Right cardiac atrium (tissue), 5 donors: ENCODE measurements at regions of chr3 and their contacts with region 1.

Region 1: DNA sequence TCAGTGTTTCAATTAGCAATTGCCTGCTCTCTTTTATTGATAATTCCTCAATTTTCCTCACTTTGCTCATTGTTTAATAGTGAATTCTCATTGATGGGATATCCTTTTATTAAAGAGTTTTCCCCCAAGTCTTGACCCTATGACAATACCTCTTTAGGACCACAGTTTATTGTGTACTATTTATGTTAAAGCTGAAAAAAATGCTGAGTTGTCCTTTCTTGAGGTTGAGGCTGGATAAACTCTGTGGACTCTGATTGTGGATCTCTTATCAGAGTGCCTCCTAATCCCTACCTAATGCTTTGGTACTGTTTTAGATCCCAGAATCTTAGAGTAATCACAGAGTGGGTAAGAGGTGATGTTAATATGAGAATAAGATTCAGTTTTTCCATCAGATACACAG is 416.3 kb upstream of the GBE1 start:
- DNase-seq: no peak
- ATAC-seq: no peak
- H3K4me3 ChIP-seq: no peak overlapping the region
- H3K27ac ChIP-seq: no peak overlapping the region
- H3K4me1 ChIP-seq: no peaks in the 10 kb centered on the region
- H3K27me3 ChIP-seq: no peaks in the 10 kb centered on the region

Region 2: DNA sequence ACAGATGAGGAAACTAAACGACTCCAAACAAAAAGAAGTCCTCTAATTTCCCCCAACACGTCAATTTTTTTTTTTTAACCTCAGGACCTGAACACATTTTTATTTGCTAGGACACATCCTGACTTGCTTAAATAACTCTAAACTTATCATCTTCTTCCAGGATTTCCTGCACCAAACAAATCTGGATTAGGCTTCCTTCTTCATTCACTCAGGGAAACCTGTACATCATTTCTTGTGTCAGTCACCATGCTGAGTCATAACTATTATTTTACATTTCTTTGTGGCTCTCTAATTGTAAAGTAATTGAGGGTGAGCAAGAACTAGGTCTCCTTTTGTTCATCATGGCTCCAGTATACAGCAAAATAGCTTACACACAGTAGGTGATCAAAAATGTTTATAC is 17.1 kb after region 1 on chr3:
- intact Hi-C with region 1: loop called in 1 of 4 experiments (anchors 2 kb)
- DNase-seq: no peak
- ATAC-seq: no peak
- H3K4me3 ChIP-seq: no peak overlapping the region
- H3K27ac ChIP-seq: no peak overlapping the region
- H3K4me1 ChIP-seq: no peaks in the 10 kb centered on the region
- H3K27me3 ChIP-seq: no peaks in the 10 kb centered on the region

Region 3: DNA sequence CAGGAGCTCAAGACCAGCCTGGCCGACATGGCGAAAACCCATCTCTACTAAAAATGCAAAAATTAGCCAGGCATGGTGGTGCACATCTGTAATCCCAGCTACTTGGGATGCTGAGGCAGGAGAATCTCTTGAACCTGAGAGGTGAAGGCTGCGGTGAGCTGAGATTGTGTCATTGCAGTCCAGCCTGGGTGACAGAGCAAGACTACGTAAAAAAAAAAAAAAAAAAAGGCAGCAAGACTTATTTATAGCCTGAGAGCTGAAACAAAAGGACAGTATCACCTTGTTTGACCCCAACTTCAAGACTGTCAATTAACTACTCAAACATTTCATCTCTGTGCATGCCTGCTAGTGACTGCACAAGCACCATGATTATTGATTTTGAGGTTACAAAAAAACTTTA is 62.5 kb after region 1 on chr3:
- intact Hi-C with region 1: no loop called
- DNase-seq: no peak
- ATAC-seq: peak in 1 of 2 donors; percentile 40
- H3K4me3 ChIP-seq: no peak overlapping the region
- H3K27ac ChIP-seq: no peak overlapping the region
- H3K4me1 ChIP-seq: no peaks in the 10 kb centered on the region
- H3K27me3 ChIP-seq: no peaks in the 10 kb centered on the region